A549 (cell line): ENCODE measurements at regions of chrX and their contacts with region 1.

Region 1: DNA sequence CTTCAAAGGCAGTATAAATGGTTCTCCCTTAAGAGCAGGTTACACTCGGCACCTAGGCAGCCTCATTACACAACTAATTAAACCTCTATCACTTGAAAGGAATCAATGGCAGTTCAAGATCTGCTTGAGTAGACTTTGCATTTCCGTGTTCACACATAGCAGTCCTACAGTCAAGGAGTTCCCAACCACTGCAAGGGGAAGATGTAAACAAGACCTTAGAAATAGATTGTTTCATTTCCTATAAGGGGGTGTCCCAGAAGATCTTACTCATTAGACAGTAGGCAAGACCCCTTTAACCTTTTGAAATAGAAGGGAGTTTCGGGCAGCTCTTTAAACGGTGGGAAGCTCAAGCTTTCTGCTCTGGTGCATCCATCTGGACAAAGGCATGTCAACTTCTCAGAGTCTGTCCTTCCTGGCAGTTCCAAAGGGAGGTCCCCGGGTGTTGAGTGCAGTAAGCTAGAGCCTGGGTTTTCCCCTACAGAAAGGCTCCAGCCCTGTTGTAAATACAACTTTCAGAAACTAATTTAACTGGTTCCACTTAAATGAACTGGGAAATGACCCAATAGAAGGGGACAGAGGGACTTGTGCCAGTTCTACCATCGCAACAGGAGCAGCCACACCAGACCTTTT is 150.8 kb downstream of the RBMX2 start:
- DNase-seq: no peak
- ATAC-seq: no peak
- H3K4me3 ChIP-seq: no peak overlapping the region
- H3K27ac ChIP-seq: no peak overlapping the region
- H3K4me1 ChIP-seq: 0 out of 3 replicates have a peak, but pooled peaks cover 3% of the 10 kb centered on the region
- CTCF ChIP-seq: no peak
- EP300 ChIP-seq: no peak
- POLR2A ChIP-seq: no peak
- RAD21 ChIP-seq: no peak

Region 2: DNA sequence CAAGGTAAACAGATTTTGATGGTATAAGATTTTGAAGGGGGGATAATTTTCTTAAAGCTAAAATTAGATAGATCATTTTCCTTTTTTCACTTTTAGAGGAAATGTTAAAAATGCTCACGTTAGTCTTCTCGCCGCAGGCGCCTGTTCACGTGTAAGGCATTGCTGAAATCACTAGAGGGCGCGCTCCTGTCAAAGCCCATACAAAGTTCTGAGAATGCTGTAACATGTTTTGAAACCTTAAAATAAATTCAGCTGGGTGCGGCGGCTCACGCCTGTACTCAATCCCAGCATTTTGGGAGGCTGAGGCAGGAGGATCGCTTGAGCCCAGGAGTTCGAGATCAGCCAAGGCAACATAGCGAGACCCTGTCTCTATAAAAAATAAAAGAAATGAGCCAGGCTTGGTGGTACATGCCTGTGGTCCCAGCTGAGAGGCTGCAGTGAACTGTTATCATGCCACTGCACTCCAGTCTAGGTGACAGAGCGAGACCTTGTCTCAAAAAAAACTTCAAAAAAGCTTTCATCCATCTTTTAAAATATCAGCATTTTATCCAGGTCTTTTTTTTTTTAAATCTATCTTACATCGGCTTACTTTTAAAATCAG is 12.7 kb before region 1 on chrX:
- CTCF ChIA-PET with region 1: interaction called, 11 read pairs
- POLR2A ChIA-PET with region 1: no interaction called
- DNase-seq: peak; percentile 25 to 53
- ATAC-seq: peak; percentile 66 to 87; a peak in 4 of 6 replicates
- H3K4me3 ChIP-seq: no peak overlapping the region
- H3K27ac ChIP-seq: no peak overlapping the region
- H3K4me1 ChIP-seq: no peaks in the 10 kb centered on the region
- CTCF ChIP-seq: peak; percentile 79
- EP300 ChIP-seq: no peak
- POLR2A ChIP-seq: no peak
- RAD21 ChIP-seq: peak; percentile 61 to 63